Gastrocnemius medialis (tissue), 4 donors: ENCODE measurements at regions of chr15 and their contacts with region 1.

Region 1: GRCh38 chr15:61051569-61052031 is 177.5 kb downstream of the RORA start:
- DNase-seq: peak; percentile 32 to 37
- ATAC-seq: peak; percentile 76 to 84
- H3K4me3 ChIP-seq: no peak overlapping the region
- H3K27ac ChIP-seq: peak overlapping the region in 1 of 4 donors; percentile 3
- H3K4me1 ChIP-seq: peaks cover 18 to 32% of the 10 kb centered on the region in 2 donors
- H3K27me3 ChIP-seq: no peaks in the 10 kb centered on the region
- CTCF ChIP-seq: peak; percentile 33 to 73 (median 59)
- POLR2A ChIP-seq: no peak

Region 2: GRCh38 chr15:60585743-60586708 is 465.6 kb before region 1 on chr15:
- in situ Hi-C with region 1: loop called in 2 of 4 experiments (anchors 10 kb)
- intact Hi-C with region 1: loop called (anchors 2 kb)
- DNase-seq: peak; percentile 32 to 38
- ATAC-seq: peak; percentile 64 to 78
- H3K4me3 ChIP-seq: no peak overlapping the region
- H3K27ac ChIP-seq: peak overlapping the region; percentile 12 to 64 (median 34)
- H3K4me1 ChIP-seq: peaks cover 76 to 95% of the 10 kb centered on the region in 2 donors
- H3K27me3 ChIP-seq: no peaks in the 10 kb centered on the region
- CTCF ChIP-seq: peak; percentile 83 to 94 (median 87)
- POLR2A ChIP-seq: no peak

Region 3: DNA sequence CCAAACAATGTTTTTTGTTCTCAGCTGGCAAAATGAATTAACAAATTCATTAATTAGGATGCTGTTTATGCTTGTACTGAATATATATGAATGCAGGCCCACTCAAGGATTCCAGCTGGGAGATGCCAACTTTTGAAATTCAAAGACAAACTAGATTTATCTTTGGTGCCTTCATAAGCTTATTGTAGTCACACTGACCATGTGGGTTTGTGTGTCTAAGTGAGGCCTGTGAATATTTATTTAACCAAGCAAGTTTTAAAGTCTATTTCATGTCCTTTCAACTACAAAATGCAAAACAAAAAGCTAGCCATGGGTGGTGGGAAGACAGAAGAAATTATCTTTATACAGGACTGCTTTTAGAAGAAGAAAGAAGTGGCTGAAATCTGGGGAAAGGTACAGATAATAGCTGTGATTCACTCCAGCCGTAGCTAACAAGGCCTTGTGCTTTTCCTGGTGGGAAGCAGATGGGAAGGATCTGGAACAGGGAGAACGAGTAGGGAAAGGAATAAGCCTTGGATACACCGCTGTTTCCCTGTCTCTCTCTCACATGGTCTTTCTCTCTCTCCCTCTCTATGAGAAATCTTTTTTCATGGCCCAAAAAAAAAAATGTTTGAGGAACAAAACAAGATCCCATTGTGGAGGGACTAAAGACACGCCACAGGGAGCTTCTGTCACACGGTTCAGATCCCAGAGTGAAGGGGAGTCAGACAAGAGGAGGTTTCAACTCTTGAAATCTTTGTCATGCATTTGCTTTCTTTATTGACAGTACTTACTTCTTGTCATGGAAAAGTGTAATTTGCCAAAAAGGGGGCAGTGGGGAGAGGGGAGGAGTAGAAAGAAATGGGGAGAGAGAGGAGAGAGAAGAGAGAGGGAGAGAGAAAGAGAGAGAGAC is 48.0 kb before region 1 on chr15:
- in situ Hi-C with region 1: no loop called
- intact Hi-C with region 1: no loop called
- DNase-seq: no peak
- ATAC-seq: no peak
- H3K4me3 ChIP-seq: no peak overlapping the region
- H3K27ac ChIP-seq: no peak overlapping the region
- H3K4me1 ChIP-seq: peaks cover 3 to 8% of the 10 kb centered on the region in 2 donors
- H3K27me3 ChIP-seq: no peaks in the 10 kb centered on the region
- CTCF ChIP-seq: no peak
- POLR2A ChIP-seq: no peak